ENCODE measurements at regions of chr14 and their contacts with region 1.

Region 1: DNA sequence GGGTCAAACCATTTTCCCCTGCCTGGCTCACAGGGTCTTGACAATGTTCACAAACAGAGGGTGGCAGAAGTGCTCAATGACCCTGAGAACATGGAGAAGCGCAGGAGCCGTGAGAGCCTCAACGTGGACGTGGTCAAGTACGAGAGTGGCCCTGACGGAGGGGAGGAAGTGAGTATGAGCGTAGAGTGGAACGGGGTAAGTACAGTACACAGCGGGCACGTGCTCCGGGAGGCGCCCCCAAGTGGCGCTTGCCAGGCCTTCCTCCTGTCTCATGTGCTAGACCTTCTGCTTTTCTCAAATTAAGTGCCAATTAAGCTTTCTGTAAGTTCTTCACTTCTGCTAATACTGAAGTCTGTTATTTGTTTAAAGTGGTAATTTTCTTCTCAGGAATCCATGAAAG is 35.9 kb downstream of the XRCC3 start:
- DNase-seq: peak; percentile 61
- H3K4me3 Mint-ChIP-seq: no peak overlapping the region
- H3K27ac Mint-ChIP-seq: no peak overlapping the region
- H3K4me1 Mint-ChIP-seq: peaks cover 4% of the 10 kb centered on the region
- H3K27me3 Mint-ChIP-seq: no peaks in the 10 kb centered on the region

Region 2: GRCh38 chr14:103576371-103577024 is 102.9 kb before region 1 on chr14:
- CTCF ChIA-PET with region 1: interaction called, 6 read pairs
- intact Hi-C with region 1: loop called (anchors 1 kb)
- DNase-seq: no peak
- H3K4me3 Mint-ChIP-seq: no peak overlapping the region
- H3K27ac Mint-ChIP-seq: peak overlapping the region; percentile 52
- H3K4me1 Mint-ChIP-seq: no peaks in the 10 kb centered on the region
- H3K27me3 Mint-ChIP-seq: no peaks in the 10 kb centered on the region